ENCODE measurements at regions of chr6 and their contacts with region 1.

Region 1: GRCh38 chr6:78222226-78222625 is 569.4 kb downstream of the MEI4 start:
- DNase-seq: no peak
- H3K4me3 ChIP-seq: no peak overlapping the region
- H3K27ac ChIP-seq: no peak overlapping the region
- H3K4me1 ChIP-seq: no peaks in the 10 kb centered on the region
- H3K27me3 ChIP-seq: no peaks in the 10 kb centered on the region
- CTCF ChIP-seq: no peak
- EP300 ChIP-seq: no peak
- POLR2A ChIP-seq: no peak

Region 2: DNA sequence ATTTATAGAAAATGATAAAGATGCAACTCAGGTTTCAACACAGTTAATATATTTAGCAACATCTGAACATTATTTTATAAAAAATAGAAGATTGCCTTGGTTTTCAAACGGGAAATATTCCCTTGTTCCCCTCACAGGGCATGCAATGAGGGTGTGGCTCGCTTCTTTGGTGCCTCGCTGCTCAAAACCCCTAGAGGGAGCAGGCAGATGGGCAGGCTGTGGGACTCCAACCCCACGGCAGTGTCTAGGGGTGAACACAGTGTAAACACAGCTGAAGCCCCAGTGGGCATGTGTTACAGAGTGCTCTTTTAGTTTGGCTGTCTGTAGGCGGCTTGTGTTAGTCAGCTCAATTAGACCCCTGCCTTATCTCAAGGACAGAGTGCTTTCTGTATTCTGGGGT is 1589.0 kb before region 1 on chr6:
- intact Hi-C with region 1: no loop called
- DNase-seq: no peak
- H3K4me3 ChIP-seq: no peak overlapping the region
- H3K27ac ChIP-seq: no peak overlapping the region
- H3K4me1 ChIP-seq: no peaks in the 10 kb centered on the region
- H3K27me3 ChIP-seq: no peaks in the 10 kb centered on the region
- CTCF ChIP-seq: no peak
- EP300 ChIP-seq: no peak
- POLR2A ChIP-seq: no peak

Region 3: DNA sequence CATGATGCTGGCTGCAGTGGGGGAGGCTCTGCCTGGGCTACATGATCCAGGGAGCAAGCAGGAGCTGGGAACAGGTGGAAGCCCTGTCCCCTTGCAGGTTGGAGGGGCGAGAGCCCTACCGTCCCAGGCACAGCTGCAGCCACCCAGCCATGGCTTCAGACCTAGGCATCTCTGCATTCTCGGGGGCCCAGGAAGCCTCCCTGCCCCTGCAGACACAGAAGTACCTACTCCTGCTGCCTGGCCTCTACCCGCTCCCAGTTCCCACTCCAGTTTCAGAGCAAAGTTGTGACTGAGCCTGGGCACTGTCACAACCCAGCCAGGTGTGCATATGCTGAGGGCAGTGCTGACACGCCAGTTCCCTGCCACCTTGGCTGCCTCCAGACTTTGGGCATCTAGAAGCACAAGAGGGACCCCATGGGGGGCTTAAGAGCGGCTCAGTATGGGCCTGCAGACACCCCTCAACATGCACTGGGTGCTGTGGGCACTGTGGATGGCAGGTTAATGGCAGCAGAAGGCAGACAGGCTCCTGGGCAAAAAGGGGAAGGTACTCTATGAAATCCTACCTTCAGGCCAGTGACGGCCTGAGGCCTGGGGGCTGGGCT is 1404.7 kb before region 1 on chr6:
- intact Hi-C with region 1: loop called in 1 of 4 experiments (anchors 5 kb)
- DNase-seq: peak in 1 of 5 donors; percentile 9
- H3K4me3 ChIP-seq: no peak overlapping the region
- H3K27ac ChIP-seq: no peak overlapping the region
- H3K4me1 ChIP-seq: no peaks in the 10 kb centered on the region
- H3K27me3 ChIP-seq: no peaks in the 10 kb centered on the region
- CTCF ChIP-seq: no peak
- EP300 ChIP-seq: no peak
- POLR2A ChIP-seq: no peak